ENCODE measurements at regions of chr4 and their contacts with region 1.

Region 1: DNA sequence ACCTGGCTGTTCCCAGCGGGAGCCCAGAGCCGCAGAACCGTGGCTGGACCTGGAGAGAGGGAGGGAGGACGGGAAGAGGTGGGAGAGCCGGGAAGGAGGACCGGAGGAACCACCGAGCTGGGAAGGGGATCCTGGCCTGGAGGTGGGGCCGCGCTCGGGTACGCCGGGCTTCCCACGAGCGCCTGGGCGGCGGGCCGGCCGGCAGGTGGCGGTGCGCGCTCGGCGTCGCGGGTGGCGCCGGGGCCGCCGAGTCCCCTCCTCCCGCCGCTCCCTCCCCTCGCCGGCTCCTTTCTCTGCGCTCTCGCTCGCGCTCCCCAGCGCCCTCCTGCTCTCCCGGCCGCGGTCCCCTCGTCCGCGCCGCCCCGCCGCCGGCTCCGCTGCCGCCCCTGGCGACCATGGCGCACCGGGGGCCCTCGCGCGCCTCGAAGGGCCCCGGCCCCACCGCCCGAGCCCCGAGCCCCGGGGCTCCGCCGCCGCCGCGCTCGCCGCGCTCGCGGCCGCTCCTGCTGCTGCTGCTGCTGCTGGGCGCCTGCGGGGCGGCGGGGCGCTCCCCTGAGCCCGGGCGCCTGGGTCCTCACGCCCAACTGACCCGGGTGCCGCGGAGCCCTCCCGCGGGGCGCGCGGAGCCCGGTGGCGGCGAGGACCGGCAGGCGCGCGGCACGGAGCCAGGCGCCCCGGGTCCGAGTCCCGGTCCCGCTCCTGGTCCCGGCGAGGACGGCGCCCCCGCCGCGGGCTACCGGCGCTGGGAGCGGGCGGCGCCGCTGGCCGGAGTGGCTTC is at the start of gene SORCS2:
- DNase-seq: peak; percentile 49
- H3K4me3 ChIP-seq: peak within 1 kb of the TSS; percentile 4 to 40 (median 36)
- H3K27ac ChIP-seq: no peak within 1 kb of the TSS
- H3K4me1 ChIP-seq: peaks cover 0 to 20% (median 5%) of the 10 kb centered on the region in 4 donors
- H3K27me3 ChIP-seq: peaks cover 76% of the 10 kb centered on the region
- CTCF ChIP-seq: peak; percentile 22 to 57 (median 40)
- EP300 ChIP-seq: no peak
- POLR2A ChIP-seq: no peak
- total RNA-seq, gene SORCS2: 0.48 to 1.8 (median 0.68) TPM in 3 of 4 donors, not detected in the other

Region 2: GRCh38 chr4:6658597-6659075 is 533.8 kb before region 1 on chr4:
- in situ Hi-C with region 1: no loop called
- intact Hi-C with region 1: no loop called
- DNase-seq: peak; percentile 28
- H3K4me3 ChIP-seq: peak overlapping the region; percentile 15 to 45 (median 22)
- H3K27ac ChIP-seq: peak overlapping the region; percentile 49 to 74 (median 56)
- H3K4me1 ChIP-seq: peaks cover 0 to 14% (median under 1%) of the 10 kb centered on the region in 4 donors
- H3K27me3 ChIP-seq: peaks cover 31% of the 10 kb centered on the region
- CTCF ChIP-seq: no peak
- EP300 ChIP-seq: no peak
- POLR2A ChIP-seq: no peak

Region 3: GRCh38 chr4:6953751-6954380 is 238.6 kb before region 1 on chr4:
- in situ Hi-C with region 1: no loop called
- intact Hi-C with region 1: no loop called
- DNase-seq: peak; percentile 91
- H3K4me3 ChIP-seq: peak overlapping the region in 2 of 4 donors; percentile 12 to 37
- H3K27ac ChIP-seq: peak overlapping the region; percentile 68 to 82 (median 80)
- H3K4me1 ChIP-seq: peaks cover 5 to 52% (median 22%) of the 10 kb centered on the region in 4 donors
- H3K27me3 ChIP-seq: no peaks in the 10 kb centered on the region
- CTCF ChIP-seq: no peak
- EP300 ChIP-seq: no peak
- POLR2A ChIP-seq: peak; percentile 55

Region 4: DNA sequence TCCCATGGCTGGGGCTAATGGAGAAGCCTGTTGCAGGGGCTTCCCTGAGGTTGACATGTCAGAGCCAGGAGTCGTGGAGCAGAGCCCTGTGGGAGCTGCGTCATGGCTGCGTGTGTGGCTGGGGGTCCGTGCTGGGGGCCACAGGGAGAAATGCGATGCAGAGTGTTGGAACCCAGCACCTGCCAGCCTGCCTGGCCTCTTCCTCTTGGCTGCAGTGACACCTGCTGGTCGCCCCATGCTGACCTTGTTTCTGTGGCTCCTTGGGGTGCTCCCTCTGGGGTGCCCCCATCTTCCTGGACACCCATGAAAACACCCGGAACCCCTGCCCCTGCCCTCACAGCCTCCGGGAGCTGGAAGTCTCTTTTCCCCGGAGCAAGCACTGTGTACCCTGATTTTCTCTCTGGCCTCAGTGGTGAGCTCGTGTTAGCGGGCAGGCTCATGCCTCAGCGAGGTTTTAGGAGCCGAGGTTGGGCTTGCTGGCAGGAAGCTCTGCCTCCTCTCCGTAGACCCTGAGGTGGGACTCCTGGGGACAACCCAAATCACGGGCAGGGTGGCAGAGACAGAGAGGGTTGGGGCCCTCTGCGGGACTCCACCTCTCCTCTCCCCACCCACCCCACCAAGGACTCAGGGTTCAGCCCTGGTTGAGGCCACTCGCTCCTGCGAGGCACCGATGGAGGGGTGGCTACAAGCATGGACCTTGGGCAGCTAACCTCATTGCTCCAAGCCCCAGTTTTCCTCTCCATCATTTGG is 103.6 kb after region 1 on chr4:
- in situ Hi-C with region 1: loop called in 1 of 4 experiments (anchors 10 kb)
- intact Hi-C with region 1: loop called (anchors 1 kb)
- DNase-seq: peak; percentile 24
- H3K4me3 ChIP-seq: no peak overlapping the region
- H3K27ac ChIP-seq: no peak overlapping the region
- H3K4me1 ChIP-seq: peaks cover 0 to 16% (median 9%) of the 10 kb centered on the region in 4 donors
- H3K27me3 ChIP-seq: no peaks in the 10 kb centered on the region
- CTCF ChIP-seq: peak; percentile 47 to 57 (median 48)
- EP300 ChIP-seq: no peak
- POLR2A ChIP-seq: no peak

Region 5: DNA sequence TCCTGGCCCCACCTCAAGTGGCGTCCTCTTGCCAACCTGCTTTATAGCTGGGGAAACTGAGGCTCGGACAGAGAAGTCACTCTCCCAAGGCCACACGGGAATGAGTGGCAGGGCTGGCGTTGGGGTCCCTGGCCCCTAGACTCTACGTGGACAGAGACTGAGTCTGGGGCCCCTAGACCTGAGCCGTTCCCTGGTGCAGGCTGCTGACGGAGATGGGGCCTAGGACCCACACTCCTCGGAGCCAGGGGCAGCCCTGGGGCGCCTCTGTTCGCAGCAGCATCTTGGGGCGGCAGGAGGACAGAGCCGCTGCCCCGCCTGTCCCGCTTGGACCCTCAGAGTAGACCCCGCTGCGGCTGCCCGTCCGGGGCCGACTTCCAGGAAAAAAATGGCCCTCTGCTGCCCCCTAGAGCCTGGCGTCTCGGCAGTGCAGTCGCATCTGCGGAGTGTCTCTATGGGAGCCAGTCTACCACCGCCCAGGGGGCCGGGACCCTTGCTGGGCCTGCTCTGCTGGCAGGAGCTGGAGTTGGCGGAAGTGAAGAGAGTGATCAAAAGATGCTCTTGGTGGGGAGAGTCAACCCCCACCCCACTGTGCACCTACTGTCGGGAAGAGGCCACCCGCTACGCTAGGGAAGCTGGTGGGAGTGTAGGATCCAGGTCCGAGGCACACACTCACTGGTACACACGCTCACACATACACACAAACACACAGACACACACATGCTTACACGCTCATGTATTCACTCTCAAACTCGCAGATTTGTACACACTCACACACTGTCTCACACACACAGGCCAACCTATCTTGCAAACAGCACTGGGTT is 527.1 kb after region 1 on chr4:
- in situ Hi-C with region 1: loop called in 2 of 4 experiments (anchors 25 kb)
- intact Hi-C with region 1: loop called (anchors 1 kb)
- DNase-seq: peak; percentile 50
- H3K4me3 ChIP-seq: no peak overlapping the region
- H3K27ac ChIP-seq: no peak overlapping the region
- H3K4me1 ChIP-seq: no peaks in the 10 kb centered on the region
- H3K27me3 ChIP-seq: peaks cover 6% of the 10 kb centered on the region
- CTCF ChIP-seq: peak; percentile 65 to 82 (median 81)
- EP300 ChIP-seq: no peak
- POLR2A ChIP-seq: no peak